ENCODE measurements at regions of chr6 and their contacts with region 1.

Region 1: DNA sequence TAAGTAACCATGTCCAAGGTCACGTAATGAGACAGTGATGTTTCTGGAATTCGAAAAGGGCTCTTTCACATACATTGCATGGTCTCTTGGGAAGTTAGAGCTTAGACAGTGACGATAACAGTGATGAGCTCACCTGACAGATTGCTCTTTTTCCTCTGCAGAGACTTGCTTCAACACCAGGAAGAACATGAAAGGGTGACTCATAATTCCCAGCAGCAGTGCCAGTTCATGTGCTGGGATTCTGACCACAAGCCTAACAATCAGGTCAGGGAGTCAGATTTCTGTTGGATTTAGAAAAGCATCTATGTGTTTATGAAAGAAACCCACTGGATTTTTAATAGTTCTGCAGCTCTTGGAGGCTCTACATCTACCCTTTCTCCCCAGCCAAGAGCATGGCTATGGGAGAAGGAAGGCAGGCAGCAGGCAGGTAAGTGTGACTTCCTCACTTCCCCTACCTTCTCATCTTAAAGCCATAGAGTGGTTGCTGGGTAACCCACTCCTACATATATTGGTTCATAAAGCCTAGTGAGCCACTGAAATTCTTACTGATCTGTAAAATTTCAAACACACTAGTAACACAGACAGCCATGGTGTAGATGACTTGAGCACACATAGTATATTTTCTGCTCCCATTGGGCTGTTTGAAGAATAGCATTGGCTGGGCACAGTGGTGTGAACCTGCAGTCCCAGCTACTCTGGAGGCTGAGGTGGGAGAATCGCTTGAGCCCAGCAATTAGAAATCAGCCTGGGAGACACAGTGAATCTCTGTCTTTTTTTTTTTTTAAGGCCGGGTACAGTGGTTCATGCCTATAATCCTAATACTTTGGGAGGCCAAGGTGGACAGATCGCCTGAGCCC is 44.4 kb upstream of the LOC128125822 start:
- DNase-seq: no peak
- H3K4me3 Mint-ChIP-seq: no peak overlapping the region
- H3K27ac Mint-ChIP-seq: no peak overlapping the region
- H3K4me1 Mint-ChIP-seq: peaks cover 13% of the 10 kb centered on the region
- H3K27me3 Mint-ChIP-seq: no peaks in the 10 kb centered on the region

Region 2: DNA sequence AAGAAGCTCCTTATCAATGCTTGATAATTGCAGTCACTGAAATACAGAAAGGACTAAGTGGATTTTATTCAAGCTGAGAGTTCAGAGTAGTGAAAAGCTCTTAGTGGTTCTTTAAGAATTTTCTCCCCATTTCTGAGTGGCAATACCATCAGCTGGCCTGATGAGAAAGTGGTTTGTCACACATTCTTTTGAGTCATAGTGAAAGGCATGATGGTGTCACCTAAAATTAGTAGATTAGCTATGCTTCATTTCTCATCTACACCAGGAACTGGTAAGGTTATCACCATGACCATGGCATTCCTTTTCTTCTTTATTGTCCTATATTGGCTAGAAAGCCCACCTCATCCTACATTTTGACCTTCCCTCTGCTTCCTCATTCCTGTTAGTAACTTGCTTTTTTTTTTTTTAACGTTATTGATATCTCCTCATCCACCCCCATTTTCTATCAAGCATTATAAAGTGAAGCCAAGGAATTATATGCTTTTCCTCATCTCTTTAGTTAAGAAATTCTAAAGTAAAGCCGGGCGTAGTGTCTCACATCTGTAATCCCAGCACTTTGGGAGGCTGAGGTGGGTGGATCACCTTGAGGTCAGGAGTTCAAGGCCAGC is 23.0 kb before region 1 on chr6:
- CTCF ChIA-PET with region 1: no interaction called
- POLR2A ChIA-PET with region 1: no interaction called
- intact Hi-C with region 1: loop called (anchors 2 kb)
- DNase-seq: no peak
- H3K4me3 Mint-ChIP-seq: no peak overlapping the region
- H3K27ac Mint-ChIP-seq: no peak overlapping the region
- H3K4me1 Mint-ChIP-seq: no peaks in the 10 kb centered on the region
- H3K27me3 Mint-ChIP-seq: no peaks in the 10 kb centered on the region

Measured in activated CD4-positive, alpha-beta memory T cell treated with anti-CD3 and anti-CD28 coated beads for 36 hours (primary cell).